Naive thymus-derived CD8-positive, alpha-beta T cell (primary cell): ENCODE measurements at regions of chr17 and their contacts with region 1.

Region 1: GRCh38 chr17:56592487-56593085 is 913 bp upstream of the NOG start:
- DNase-seq: peak; percentile 53 to 85 (median 80)
- ATAC-seq: peak; percentile 47 to 61
- H3K4me3 Mint-ChIP-seq: peak overlapping the region; percentile 79 to 98 (median 90)
- H3K27ac Mint-ChIP-seq: peak overlapping the region in 9 of 10 donors; percentile 48 to 93 (median 84)
- H3K4me1 Mint-ChIP-seq: peaks cover 9 to 25% (median 20%) of the 10 kb centered on the region in 4 donors
- H3K27me3 Mint-ChIP-seq: peaks cover 0 to 23% (median 8%) of the 10 kb centered on the region in 5 donors

Region 2: GRCh38 chr17:56521104-56521777 is 71.3 kb before region 1 on chr17:
- POLR2A ChIA-PET with region 1: no interaction called
- DNase-seq: no peak
- ATAC-seq: no peak
- H3K4me3 Mint-ChIP-seq: no peak overlapping the region
- H3K27ac Mint-ChIP-seq: no peak overlapping the region
- H3K4me1 Mint-ChIP-seq: peaks cover 0 to 2% (median 0%) of the 10 kb centered on the region in 4 donors
- H3K27me3 Mint-ChIP-seq: peaks cover 2 to 33% (median 12%) of the 10 kb centered on the region in 5 donors

Region 3: GRCh38 chr17:56577190-56577842 is 15.3 kb before region 1 on chr17:
- POLR2A ChIA-PET with region 1: no interaction called
- DNase-seq: no peak
- ATAC-seq: no peak
- H3K4me3 Mint-ChIP-seq: no peak overlapping the region
- H3K27ac Mint-ChIP-seq: no peak overlapping the region
- H3K4me1 Mint-ChIP-seq: no peaks in the 10 kb centered on the region
- H3K27me3 Mint-ChIP-seq: peaks cover 10 to 29% (median 19%) of the 10 kb centered on the region in 5 donors

Region 4: GRCh38 chr17:56653877-56654276 is 61.3 kb after region 1 on chr17:
- POLR2A ChIA-PET with region 1: interaction called, 108 read pairs
- DNase-seq: peak; percentile 21 to 89 (median 71)
- ATAC-seq: peak; percentile 100
- H3K4me3 Mint-ChIP-seq: no peak overlapping the region
- H3K27ac Mint-ChIP-seq: peak overlapping the region in 8 of 10 donors; percentile 45 to 91 (median 75)
- H3K4me1 Mint-ChIP-seq: peaks cover 5 to 7% (median 6%) of the 10 kb centered on the region in 4 donors
- H3K27me3 Mint-ChIP-seq: peaks cover 0 to 3% (median 0%) of the 10 kb centered on the region in 5 donors

Region 5: DNA sequence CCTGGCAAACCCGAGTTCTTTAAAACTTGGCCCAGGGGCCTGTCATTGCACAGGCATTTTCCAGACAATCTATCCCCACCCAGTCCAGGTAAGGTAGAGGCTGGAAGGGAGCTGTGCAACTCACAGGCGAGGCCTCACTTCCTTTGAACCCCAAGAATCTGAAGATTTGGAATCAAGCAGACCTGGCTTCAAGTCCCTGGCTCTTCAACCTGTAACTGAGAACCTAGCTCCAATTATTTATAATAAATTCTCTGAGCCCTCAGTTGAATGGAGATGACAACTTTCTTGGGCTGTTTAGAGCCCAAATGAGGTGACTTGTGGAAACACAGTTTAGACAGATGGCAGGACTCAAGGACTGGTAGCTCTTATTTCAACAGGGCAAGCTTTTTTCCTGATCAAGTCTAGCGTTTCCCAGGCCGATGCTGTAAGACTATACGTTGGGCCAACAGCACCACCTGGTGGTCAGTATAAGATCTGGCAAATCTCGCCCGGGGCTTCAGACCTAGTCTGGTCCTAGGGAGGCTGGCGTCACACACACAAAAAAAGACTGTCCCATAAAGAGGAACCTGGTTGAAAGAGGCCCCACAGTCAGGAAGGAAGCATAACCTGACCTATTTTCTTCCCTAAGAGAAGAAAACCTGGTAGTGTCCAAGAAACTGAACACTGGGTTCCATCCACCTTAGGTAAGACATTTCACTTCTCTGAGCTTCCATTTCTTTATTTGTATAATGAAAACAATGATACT is 123.2 kb after region 1 on chr17:
- POLR2A ChIA-PET with region 1: interaction called, 15 read pairs
- DNase-seq: peak; percentile 58 to 89 (median 72)
- ATAC-seq: peak; percentile 88 to 98
- H3K4me3 Mint-ChIP-seq: no peak overlapping the region
- H3K27ac Mint-ChIP-seq: peak overlapping the region in 1 of 10 donors; percentile 30
- H3K4me1 Mint-ChIP-seq: peaks cover 0 to 2% (median 0%) of the 10 kb centered on the region in 4 donors
- H3K27me3 Mint-ChIP-seq: peaks cover 0 to 3% (median 2%) of the 10 kb centered on the region in 5 donors

Region 6: GRCh38 chr17:56779898-56780733 is 187.5 kb after region 1 on chr17:
- POLR2A ChIA-PET with region 1: interaction called, 45 read pairs
- DNase-seq: peak; percentile 72 to 89 (median 88)
- ATAC-seq: peak; percentile 96 to 97
- H3K4me3 Mint-ChIP-seq: peak overlapping the region; percentile 89 to 98 (median 95)
- H3K27ac Mint-ChIP-seq: peak overlapping the region; percentile 91 to 99 (median 98)
- H3K4me1 Mint-ChIP-seq: peaks cover 17 to 24% (median 21%) of the 10 kb centered on the region in 4 donors
- H3K27me3 Mint-ChIP-seq: peaks cover 0 to 5% (median 0%) of the 10 kb centered on the region in 5 donors

Region 7: GRCh38 chr17:57114085-57114673 is 521.6 kb after region 1 on chr17:
- POLR2A ChIA-PET with region 1: no interaction called
- DNase-seq: peak; percentile 26 to 73 (median 54)
- ATAC-seq: peak; percentile 69 to 83
- H3K4me3 Mint-ChIP-seq: no peak overlapping the region
- H3K27ac Mint-ChIP-seq: peak overlapping the region in 1 of 10 donors; percentile 24
- H3K4me1 Mint-ChIP-seq: peaks cover 0 to 7% (median 0%) of the 10 kb centered on the region in 4 donors
- H3K27me3 Mint-ChIP-seq: no peaks in the 10 kb centered on the region